Mammary epithelial cell (primary cell): ENCODE measurements at regions of chr22 and their contacts with region 1.

Region 1: GRCh38 chr22:46798366-46799350 is 36.2 kb downstream of the TBC1D22A start:
- DNase-seq: peak; percentile 34
- H3K4me3 ChIP-seq: no peak overlapping the region
- H3K27ac ChIP-seq: no peak overlapping the region
- H3K4me1 ChIP-seq: peaks cover 6% of the 10 kb centered on the region
- H3K27me3 ChIP-seq: no peaks in the 10 kb centered on the region
- CTCF ChIP-seq: peak; percentile 90 to 94

Region 2: GRCh38 chr22:46250035-46250782 is 548.4 kb before region 1 on chr22 and contains the start of gene CDPF1:
- CTCF ChIA-PET with region 1: no interaction called
- dilution Hi-C with region 1: no loop called
- in situ Hi-C with region 1: no loop called
- intact Hi-C with region 1: no loop called
- DNase-seq: peak; percentile 87
- H3K4me3 ChIP-seq: peak within 1 kb of the TSS; percentile 73 to 98 (median 89)
- H3K27ac ChIP-seq: peak within 1 kb of the TSS; percentile 36
- H3K4me1 ChIP-seq: peaks cover 9% of the 10 kb centered on the region
- H3K27me3 ChIP-seq: no peaks in the 10 kb centered on the region
- CTCF ChIP-seq: peak in 1 of 2 donors; percentile 18
- total RNA-seq, gene CDPF1: 5.7 to 8.0 TPM

Region 3: GRCh38 chr22:46432164-46433068 is 366.2 kb before region 1 on chr22:
- CTCF ChIA-PET with region 1: no interaction called
- dilution Hi-C with region 1: loop called (anchors 25 kb)
- in situ Hi-C with region 1: no loop called
- intact Hi-C with region 1: no loop called
- DNase-seq: no peak
- H3K4me3 ChIP-seq: no peak overlapping the region
- H3K27ac ChIP-seq: no peak overlapping the region
- H3K4me1 ChIP-seq: peaks cover 4% of the 10 kb centered on the region
- H3K27me3 ChIP-seq: no peaks in the 10 kb centered on the region
- CTCF ChIP-seq: no peak

Region 4: DNA sequence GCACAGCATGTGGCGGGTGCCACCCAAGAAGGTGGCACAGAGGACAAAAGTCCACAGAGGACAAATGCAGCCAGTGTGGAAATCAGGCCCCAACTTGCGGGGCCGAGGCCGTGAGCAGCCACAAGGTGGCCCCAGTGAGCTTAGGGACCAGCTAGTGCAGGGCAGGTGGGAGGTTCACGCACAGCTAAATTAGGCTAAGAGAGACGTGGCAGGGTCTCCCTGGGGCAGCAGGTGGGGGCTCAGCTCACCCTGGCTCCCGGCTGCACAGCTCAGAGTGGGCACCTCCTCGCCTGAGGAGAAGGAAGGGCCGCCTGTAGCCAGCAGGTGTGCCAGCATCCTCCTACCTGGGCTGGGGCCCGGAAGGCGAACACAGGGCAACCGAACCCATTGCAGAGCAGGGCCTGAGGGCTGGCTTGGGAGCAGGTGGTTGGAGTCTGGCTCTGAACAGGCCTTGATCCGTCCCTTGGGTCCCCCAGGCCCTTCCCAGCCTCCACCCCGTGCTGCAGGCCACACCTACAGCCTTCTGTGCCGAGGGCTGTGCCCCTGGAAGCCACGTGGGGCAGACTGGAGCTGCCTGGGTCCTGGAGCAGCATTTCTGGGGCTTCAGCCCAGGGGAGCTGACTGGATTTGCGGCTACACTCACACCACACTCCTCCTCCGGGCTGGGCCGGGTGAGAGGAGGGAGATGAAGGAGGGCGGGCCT is 235.1 kb before region 1 on chr22:
- CTCF ChIA-PET with region 1: interaction called, 5 read pairs
- dilution Hi-C with region 1: loop called (anchors 25 kb)
- in situ Hi-C with region 1: no loop called
- intact Hi-C with region 1: loop called (anchors 1 kb)
- DNase-seq: peak; percentile 42
- H3K4me3 ChIP-seq: peak overlapping the region in 1 of 3 experiments; percentile 12
- H3K27ac ChIP-seq: no peak overlapping the region
- H3K4me1 ChIP-seq: peaks cover 14% of the 10 kb centered on the region
- H3K27me3 ChIP-seq: no peaks in the 10 kb centered on the region
- CTCF ChIP-seq: peak; percentile 90

Region 5: GRCh38 chr22:46681010-46681409 is 117.6 kb before region 1 on chr22:
- CTCF ChIA-PET with region 1: no interaction called
- dilution Hi-C with region 1: loop called (anchors 25 kb)
- in situ Hi-C with region 1: no loop called
- intact Hi-C with region 1: no loop called
- DNase-seq: no peak
- H3K4me3 ChIP-seq: no peak overlapping the region
- H3K27ac ChIP-seq: no peak overlapping the region
- H3K4me1 ChIP-seq: no peaks in the 10 kb centered on the region
- H3K27me3 ChIP-seq: no peaks in the 10 kb centered on the region
- CTCF ChIP-seq: peak in 1 of 2 donors; percentile 26

Region 6: DNA sequence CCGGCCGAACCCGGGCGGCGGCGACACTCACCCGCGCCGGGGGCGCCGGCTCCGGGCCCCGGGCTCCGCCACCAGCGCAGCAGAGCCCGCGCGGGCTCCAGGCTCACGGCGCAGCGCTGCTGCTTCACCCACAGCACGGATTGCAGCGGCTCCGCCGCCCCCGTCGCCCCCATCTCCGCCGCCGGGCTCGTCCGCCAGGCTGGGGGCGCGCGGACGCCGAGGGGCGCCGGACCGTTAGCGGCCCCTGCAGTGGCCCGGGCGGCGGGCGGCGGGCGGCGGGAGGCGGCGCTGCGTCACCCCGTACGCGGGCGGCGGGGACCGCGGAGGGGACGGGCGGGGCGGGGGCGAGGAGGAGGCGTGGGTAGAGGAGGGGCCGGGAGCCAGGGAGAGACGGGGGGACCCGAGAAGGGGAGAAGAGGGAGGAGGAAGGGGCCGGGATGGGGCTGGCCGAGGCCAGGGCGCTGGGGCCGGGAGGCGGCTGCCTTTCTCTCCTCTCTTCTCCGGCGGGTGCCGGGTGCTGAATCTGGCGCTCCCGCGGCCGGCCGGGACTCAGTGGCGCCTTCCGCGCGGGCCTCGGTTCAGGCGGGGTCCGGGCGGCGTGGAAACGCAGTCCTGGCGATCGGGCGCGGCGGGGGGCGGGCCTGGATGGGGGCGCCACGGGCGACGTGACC is 60.5 kb before region 1 on chr22 and contains the start of gene CERK:
- CTCF ChIA-PET with region 1: no interaction called
- dilution Hi-C with region 1: no loop called
- in situ Hi-C with region 1: no loop called
- intact Hi-C with region 1: loop called (anchors 1 kb)
- DNase-seq: no peak
- H3K4me3 ChIP-seq: peak within 1 kb of the TSS; percentile 49 to 66 (median 65)
- H3K27ac ChIP-seq: no peak within 1 kb of the TSS
- H3K4me1 ChIP-seq: peaks cover 19% of the 10 kb centered on the region
- H3K27me3 ChIP-seq: no peaks in the 10 kb centered on the region
- CTCF ChIP-seq: no peak
- total RNA-seq, gene CERK: 16.3 to 17.5 TPM